ENCODE measurements at regions of chr5 and their contacts with region 1.

Region 1: DNA sequence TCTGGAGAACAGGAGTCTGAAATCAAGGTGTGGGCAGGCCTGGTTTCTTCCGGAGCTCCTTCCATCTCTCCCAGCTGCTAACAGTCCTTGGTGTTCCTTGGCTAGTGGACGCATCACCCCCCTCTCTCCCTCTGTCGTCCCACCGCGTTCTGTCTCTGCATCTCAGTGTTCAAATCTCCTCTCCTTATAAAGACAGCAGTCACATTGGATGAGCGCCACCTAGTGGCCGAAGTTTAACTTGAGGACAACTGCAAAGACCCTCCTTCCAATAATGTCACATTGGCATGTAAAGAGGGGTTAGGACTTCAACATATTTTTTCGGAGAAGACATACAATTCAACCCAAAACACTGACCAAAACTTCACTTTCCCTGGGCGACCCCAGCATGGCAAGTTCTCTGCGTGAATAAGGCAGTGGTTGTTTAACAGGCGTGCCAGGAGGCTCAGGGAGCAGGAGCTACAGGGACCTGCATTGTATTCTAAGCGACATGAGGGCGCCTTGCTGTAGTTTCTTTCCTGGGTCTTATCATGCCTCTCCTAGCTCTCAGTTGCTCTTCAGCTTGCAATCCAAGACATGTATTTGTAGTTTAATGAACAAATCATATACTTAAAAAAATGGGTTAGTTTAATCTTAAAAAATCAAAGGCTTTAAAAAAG is 27.9 kb upstream of the BASP1 start:
- DNase-seq: peak; percentile 22
- H3K4me3 Mint-ChIP-seq: no peak overlapping the region
- H3K27ac Mint-ChIP-seq: no peak overlapping the region
- H3K4me1 Mint-ChIP-seq: no peaks in the 10 kb centered on the region
- H3K27me3 Mint-ChIP-seq: no peaks in the 10 kb centered on the region

Region 2: DNA sequence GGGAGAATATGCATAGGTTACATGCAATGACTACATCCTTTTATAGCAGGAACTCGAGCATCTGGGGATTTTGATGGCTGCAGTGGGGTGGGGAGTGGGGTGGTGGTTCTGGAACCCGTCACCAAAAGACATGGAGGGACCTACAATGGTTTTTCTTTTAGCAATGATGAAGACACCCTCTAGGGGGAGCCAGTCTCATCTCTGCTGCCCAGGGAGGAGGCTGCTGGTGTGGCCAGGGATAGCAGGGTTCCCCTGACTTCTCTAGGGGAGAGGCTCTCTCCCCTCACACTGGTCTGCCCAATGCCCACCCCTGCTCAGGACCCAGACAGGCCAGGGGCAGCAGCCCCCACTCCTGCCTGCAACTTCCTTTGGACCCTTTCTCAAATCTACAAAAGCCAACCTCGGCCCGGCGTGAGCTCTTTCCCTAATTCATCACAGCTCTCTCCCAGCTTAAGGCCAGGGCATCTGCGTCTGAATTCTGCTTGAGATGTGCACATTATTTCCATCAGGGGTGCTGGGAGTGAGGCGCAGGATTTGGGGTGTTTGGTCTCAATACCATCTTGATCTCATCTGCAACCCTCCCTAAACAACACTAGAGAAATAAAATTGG is 499.2 kb before region 1 on chr5:
- intact Hi-C with region 1: loop called (anchors 10 kb)
- DNase-seq: no peak
- H3K4me3 Mint-ChIP-seq: no peak overlapping the region
- H3K27ac Mint-ChIP-seq: no peak overlapping the region
- H3K4me1 Mint-ChIP-seq: no peaks in the 10 kb centered on the region
- H3K27me3 Mint-ChIP-seq: no peaks in the 10 kb centered on the region

Measured in activated T-helper 2 cell treated with anti-CD3 and anti-CD28 coated beads, Interferon-gamma antibody, Interleukin-2, Interleukin-4, amounts not matched to agents 10 μg/mL and 5 μg/mL and 100 μg/mL, durations not matched to agents 14 hours and 24 hours and 36 hours (primary cell).